ENCODE measurements at regions of chr20 and their contacts with region 1.

Region 1: GRCh38 chr20:23059846-23060245 is 10.4 kb upstream of the THBD start:
- DNase-seq: no peak
- ATAC-seq: no peak

Region 2: GRCh38 chr20:23103284-23104035 is 43.6 kb after region 1 on chr20:
- intact Hi-C with region 1: loop called (anchors 1 kb)
- DNase-seq: no peak
- ATAC-seq: no peak

Region 3: DNA sequence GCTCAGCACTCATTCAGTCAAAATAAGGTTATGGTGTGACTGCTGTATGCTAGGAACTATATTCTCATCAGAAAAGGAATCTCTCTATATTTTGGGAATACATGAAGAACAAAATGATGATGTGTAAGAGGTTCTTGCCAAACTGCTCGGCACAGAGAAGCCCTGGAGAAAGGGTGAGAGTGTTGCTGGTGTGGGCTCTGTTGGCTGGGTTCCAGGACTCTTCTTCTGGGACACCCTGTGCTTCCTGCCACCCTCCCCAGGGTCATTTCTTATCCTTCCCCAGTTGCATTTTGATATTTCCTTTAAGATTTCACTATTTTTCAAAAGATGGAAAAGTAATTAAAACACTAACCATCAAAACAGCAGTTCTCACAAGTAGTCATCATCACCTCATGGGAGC is 662.1 kb after region 1 on chr20:
- intact Hi-C with region 1: no loop called
- DNase-seq: no peak
- ATAC-seq: no peak